ENCODE measurements at regions of chr1 and their contacts with region 1.

Region 1: DNA sequence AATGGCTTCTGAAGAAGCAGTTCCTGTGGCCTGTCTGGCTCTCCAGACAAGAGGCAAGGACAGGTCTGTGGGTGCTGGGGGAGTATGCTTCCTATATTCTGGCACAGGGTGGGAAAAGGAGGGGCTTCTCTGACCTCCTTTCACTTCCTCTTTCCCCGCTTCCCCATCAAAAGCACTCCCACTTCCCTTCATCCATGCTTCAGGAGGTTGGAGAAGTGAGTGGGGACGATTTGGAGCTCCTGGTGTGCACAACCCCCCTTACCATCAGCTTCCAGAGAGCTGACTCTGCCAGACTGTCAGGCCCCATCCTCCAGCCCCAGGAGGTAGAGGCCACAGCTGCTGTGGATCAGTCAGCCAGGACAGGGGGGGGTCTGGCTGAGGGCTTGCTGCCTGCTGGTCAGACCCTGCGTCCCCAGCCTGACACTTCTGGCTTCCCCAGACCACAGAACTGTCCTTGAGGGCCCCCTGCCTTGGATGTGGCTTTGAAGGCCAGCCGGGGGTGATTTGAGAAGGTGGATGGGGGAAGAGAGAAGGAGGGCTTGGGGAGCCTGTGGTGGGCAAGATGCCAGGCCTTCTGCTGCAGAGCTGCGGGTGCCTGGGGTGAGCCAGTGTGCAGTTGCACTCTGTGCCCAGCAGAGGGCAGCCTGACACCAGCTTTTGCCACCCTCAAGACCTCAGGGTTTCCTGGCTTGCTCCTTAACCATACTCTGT is 21.5 kb upstream of the TMEM222 start:
- DNase-seq: peak; percentile 90
- ATAC-seq: peak; percentile 62
- H3K4me3 ChIP-seq: no peak overlapping the region
- H3K27ac ChIP-seq: peak overlapping the region; percentile 85
- H3K4me1 ChIP-seq: peaks cover 21% of the 10 kb centered on the region
- H3K27me3 ChIP-seq: no peaks in the 10 kb centered on the region
- CTCF ChIP-seq: peak; percentile 92

Region 2: DNA sequence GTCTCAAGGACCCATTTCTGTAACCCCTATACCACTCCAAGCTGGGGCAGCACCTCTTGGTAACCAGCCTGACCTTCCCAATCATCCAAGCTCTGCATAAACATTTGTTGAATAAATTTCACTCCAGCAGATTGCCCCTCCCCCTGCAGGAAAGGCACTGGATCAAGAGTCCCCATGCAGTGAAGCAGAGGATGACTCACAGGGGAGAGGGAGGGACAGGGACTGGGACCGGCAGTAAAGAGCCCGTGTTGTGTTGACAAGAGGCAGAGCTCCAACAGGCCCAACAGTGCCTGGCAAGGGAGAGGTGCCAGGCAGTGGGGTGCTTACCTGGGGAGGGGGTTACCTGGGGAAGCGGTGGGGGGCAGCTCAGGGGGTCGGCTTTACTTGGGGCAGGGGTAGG is 177.8 kb before region 1 on chr1:
- CTCF ChIA-PET with region 1: no interaction called
- POLR2A ChIA-PET with region 1: no interaction called
- intact Hi-C with region 1: no loop called
- DNase-seq: peak; percentile 90
- ATAC-seq: peak; percentile 100
- H3K4me3 ChIP-seq: no peak overlapping the region
- H3K27ac ChIP-seq: peak overlapping the region; percentile 47
- H3K4me1 ChIP-seq: peaks cover 14% of the 10 kb centered on the region
- H3K27me3 ChIP-seq: no peaks in the 10 kb centered on the region
- CTCF ChIP-seq: no peak

Region 3: GRCh38 chr1:27341525-27342252 is 41.2 kb after region 1 on chr1 and contains the start of gene SYTL1:
- CTCF ChIA-PET with region 1: interaction called, 6 read pairs
- POLR2A ChIA-PET with region 1: interaction called, 3 read pairs
- intact Hi-C with region 1: loop called (anchors 5 kb)
- DNase-seq: peak; percentile 86
- ATAC-seq: peak; percentile 72
- H3K4me3 ChIP-seq: peak within 1 kb of the TSS; percentile 79
- H3K27ac ChIP-seq: peak within 1 kb of the TSS; percentile 88
- H3K4me1 ChIP-seq: peaks cover 37% of the 10 kb centered on the region
- H3K27me3 ChIP-seq: no peaks in the 10 kb centered on the region
- CTCF ChIP-seq: no peak
- total RNA-seq, gene SYTL1: 26.8 and 34.3 TPM in 2 replicates

Region 4: DNA sequence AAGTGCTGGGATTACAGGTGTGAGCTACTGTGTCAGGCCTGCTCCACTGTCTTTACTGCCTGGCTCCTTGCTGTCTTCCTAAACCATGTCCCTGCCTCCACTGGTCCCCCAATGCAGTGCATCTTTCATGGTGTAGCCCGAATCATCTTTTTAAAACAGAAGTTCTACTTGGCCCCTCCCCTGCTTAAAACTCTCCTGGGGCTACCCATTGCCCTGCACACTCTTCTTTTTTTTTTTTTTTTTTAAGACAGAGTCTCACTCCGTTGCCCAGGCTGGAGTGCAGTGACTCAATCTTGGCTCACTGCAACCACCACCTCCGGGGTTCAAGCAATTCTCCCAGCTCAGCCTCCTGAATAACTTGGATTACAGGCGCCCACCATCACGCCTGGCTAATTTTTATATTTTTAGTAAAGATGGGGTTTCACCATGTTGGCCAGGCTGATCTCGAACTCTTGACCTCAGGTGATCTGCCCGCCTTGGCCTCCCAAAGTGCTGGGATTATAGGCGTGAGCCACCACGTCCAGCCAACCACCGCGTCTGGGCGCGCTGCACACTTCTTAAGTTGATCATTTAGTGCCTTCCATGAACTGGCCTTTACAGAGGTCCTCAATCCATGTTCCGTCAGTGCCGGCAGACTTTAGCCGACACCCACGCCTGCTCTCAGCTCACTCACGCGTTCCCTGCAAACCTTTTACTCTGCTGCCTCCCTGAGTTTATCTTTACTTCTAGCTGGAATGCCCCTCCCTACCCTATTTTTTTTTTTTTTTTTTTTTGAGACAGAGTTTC is 71.7 kb after region 1 on chr1:
- CTCF ChIA-PET with region 1: interaction called, 11 read pairs
- POLR2A ChIA-PET with region 1: interaction called, 17 read pairs
- intact Hi-C with region 1: no loop called
- DNase-seq: no peak
- ATAC-seq: no peak
- H3K4me3 ChIP-seq: no peak overlapping the region
- H3K27ac ChIP-seq: no peak overlapping the region
- H3K4me1 ChIP-seq: peaks cover 4% of the 10 kb centered on the region
- H3K27me3 ChIP-seq: no peaks in the 10 kb centered on the region
- CTCF ChIP-seq: no peak

Region 5: GRCh38 chr1:27392096-27392777 is 91.7 kb after region 1 on chr1 and contains the start of gene GPR3:
- CTCF ChIA-PET with region 1: interaction called, 25 read pairs
- POLR2A ChIA-PET with region 1: no interaction called
- intact Hi-C with region 1: loop called (anchors 1 kb)
- DNase-seq: peak; percentile 94
- ATAC-seq: peak; percentile 82
- H3K4me3 ChIP-seq: peak within 1 kb of the TSS; percentile 100
- H3K27ac ChIP-seq: peak within 1 kb of the TSS; percentile 64
- H3K4me1 ChIP-seq: peaks cover 25% of the 10 kb centered on the region
- H3K27me3 ChIP-seq: no peaks in the 10 kb centered on the region
- CTCF ChIP-seq: peak; percentile 65
- total RNA-seq, gene GPR3: 4.7 TPM in 2 replicates